ENCODE measurements at regions of chr17 and their contacts with region 1.

Region 1: DNA sequence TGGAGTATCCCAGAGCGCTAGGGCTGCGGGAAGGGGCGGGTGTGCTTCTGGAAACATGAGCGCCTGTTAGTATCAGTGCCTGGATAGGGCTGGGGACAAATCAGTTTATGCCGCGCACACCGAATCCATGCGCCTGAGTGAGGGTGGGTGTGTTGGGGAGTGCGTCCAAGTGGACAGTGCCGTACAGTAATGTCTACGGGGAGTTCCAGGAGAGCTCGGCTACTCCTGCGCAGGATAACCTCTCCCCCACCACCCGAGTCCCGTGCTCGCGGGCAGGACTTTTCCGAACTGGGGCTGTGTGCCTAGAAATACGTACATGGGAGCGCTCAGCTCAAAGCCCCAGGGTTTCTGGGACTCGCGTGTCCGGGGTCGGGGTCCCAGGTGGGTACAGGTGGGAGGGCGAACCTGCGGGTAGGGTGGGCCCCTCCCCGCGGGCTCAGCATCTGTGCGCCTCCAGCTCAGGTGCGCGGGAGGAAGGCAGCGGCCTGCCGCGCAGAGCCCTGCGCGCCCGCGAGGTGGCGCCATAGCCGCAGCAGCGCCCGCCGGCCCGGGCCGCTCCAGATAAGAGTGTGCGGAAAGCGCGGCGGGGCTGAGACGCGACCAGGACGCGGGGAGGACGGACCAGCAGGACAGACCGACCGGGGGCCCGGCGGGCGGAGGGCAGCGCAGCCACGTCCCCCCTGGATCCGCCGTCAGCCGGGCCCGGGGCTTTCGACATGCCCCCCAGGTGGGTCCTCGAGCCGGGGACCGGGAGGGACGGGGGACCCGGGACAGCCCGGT is at the start of gene HIC1:
- DNase-seq: peak; percentile 85
- ATAC-seq: peak; percentile 54
- H3K4me3 Mint-ChIP-seq: peak within 1 kb of the TSS; percentile 78
- H3K27ac Mint-ChIP-seq: peak within 1 kb of the TSS; percentile 82
- H3K4me1 Mint-ChIP-seq: peaks cover 27% of the 10 kb centered on the region
- H3K27me3 Mint-ChIP-seq: peaks cover 14% of the 10 kb centered on the region
- total RNA-seq, gene HIC1: 66.8 to 70.8 TPM

Region 2: GRCh38 chr17:1931759-1932579 is 122.7 kb before region 1 on chr17:
- CTCF ChIA-PET with region 1: no interaction called
- POLR2A ChIA-PET with region 1: no interaction called
- DNase-seq: no peak
- ATAC-seq: no peak
- H3K4me3 Mint-ChIP-seq: no peak overlapping the region
- H3K27ac Mint-ChIP-seq: no peak overlapping the region
- H3K4me1 Mint-ChIP-seq: no peaks in the 10 kb centered on the region
- H3K27me3 Mint-ChIP-seq: no peaks in the 10 kb centered on the region

Region 3: DNA sequence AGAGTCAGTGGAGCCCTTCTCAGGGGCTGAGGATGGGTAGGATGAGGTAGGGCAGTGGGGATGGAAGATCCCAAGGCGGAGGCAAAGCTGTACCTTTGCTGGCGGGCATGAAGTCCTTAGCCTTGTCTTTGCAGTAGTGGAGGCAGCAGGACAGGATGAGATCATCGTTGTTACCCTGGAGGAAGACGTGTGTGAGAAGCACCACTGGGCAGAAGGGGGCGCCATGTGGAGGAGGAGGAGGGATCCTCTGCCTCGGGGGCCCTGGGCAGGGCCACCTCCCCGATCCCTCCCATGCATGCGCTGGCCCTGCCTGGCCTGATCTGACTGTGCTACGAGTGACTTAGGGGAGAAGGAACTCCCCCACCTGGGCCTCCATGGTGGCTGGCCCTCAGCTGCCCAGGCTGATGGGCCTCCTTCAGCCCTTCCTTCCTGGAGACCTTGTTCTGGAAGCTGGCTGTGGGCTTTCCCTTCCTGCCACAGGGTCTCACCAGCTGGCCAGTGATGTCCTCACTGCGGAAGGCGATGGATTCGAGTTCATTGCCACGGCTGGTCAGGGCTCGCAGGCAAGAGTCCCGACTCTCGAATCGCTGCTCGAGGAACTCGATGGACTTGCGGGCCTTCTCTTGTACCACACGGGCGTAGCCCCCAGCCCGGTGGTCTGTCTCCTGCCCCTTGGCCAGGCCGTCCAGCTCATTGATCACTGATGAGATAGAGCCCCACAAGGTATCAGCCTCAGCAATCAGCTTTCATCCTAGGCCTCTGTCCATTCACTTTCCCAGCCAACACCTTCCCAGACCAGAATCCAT is 10.5 kb after region 1 on chr17:
- CTCF ChIA-PET with region 1: interaction called, 26 read pairs
- POLR2A ChIA-PET with region 1: interaction called, 7 read pairs
- DNase-seq: peak; percentile 84
- ATAC-seq: peak; percentile 65
- H3K4me3 Mint-ChIP-seq: no peak overlapping the region
- H3K27ac Mint-ChIP-seq: peak overlapping the region; percentile 79
- H3K4me1 Mint-ChIP-seq: peaks cover 82% of the 10 kb centered on the region
- H3K27me3 Mint-ChIP-seq: no peaks in the 10 kb centered on the region

Region 4: GRCh38 chr17:2094891-2095535 is 40.3 kb after region 1 on chr17:
- CTCF ChIA-PET with region 1: interaction called, 89 read pairs
- POLR2A ChIA-PET with region 1: interaction called, 3 read pairs
- DNase-seq: no peak
- ATAC-seq: no peak
- H3K4me3 Mint-ChIP-seq: no peak overlapping the region
- H3K27ac Mint-ChIP-seq: no peak overlapping the region
- H3K4me1 Mint-ChIP-seq: peaks cover 45% of the 10 kb centered on the region
- H3K27me3 Mint-ChIP-seq: no peaks in the 10 kb centered on the region

Region 5: DNA sequence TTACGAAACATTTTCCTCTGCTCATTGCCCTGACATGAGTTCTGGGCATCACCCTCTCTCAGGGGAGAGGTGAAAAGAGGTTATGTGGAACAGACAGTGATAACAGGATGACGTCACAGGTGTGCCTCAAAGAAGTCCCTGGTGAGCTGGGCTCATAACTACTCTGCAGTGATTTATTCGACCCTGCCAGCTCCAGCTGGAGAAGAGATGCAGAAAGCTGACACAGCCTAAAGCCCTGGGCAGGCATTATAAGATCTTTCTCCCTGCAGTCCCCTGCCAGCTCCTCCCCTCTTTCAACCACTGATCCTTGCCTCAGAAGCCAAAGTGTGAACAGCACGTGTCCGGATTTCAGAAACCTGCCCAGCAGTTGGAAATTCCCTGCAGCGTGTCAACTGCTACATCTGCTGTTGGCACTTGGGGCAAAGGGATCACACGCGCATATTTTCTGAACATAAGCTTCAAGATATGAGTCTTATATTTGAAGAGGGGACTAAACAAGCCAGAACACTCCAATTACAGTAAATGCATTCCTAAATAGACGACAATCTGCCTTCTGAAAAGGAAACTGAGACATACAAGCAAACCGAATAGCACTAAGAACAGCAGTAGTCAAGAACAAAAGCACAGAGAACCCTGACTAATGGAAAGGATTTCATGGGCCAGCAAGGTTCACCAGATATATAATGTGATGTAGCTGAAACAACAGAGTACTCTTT is 168.4 kb after region 1 on chr17:
- CTCF ChIA-PET with region 1: interaction called, 19 read pairs
- POLR2A ChIA-PET with region 1: interaction called, 3 read pairs
- DNase-seq: peak; percentile 62
- ATAC-seq: peak; percentile 82
- H3K4me3 Mint-ChIP-seq: no peak overlapping the region
- H3K27ac Mint-ChIP-seq: peak overlapping the region; percentile 26
- H3K4me1 Mint-ChIP-seq: peaks cover 41% of the 10 kb centered on the region
- H3K27me3 Mint-ChIP-seq: no peaks in the 10 kb centered on the region

Region 6: DNA sequence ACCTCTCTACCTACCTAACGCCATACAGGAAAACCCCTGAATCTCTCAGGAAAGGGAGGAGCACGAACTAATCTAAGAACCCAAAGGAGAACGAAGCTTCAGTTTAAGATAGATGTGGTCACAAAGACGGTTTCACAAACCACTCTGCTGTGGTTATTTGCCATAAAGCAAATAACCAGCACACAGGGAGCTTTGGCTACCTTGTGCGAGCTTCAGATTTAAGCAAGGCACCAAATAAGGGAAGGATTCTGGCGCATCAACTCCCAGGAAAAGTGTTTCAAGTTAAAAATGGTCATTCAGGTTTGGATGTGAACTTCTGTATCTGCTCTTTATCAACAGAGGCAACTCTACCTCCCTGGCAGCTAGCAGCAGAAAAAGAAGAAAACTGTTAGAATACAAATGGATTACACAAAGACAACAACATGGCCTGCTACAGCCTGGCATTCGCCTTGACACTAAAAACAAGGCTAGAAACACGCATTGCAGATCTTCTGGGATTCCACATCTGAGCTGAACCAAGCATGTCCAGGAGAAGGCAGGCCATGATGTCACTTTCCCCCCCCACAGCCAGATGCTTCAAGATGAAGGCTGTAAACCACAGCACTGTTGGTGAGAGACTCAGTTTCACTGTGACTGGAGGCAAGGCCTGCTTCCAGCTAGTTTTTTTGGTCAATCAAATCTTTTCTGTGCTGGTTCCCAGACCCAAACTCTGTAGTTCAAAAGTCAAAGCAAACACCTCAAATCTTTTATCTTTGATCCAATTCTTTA is 205.3 kb after region 1 on chr17:
- CTCF ChIA-PET with region 1: interaction called, 343 read pairs
- POLR2A ChIA-PET with region 1: interaction called, 6 read pairs
- DNase-seq: peak; percentile 88
- ATAC-seq: peak; percentile 77
- H3K4me3 Mint-ChIP-seq: peak overlapping the region; percentile 74
- H3K27ac Mint-ChIP-seq: peak overlapping the region; percentile 92
- H3K4me1 Mint-ChIP-seq: peaks cover 81% of the 10 kb centered on the region
- H3K27me3 Mint-ChIP-seq: no peaks in the 10 kb centered on the region

Region 7: GRCh38 chr17:2282297-2282873 is 227.7 kb after region 1 on chr17:
- CTCF ChIA-PET with region 1: interaction called, 109 read pairs
- POLR2A ChIA-PET with region 1: interaction called, 7 read pairs
- DNase-seq: no peak
- ATAC-seq: peak; percentile 54
- H3K4me3 Mint-ChIP-seq: no peak overlapping the region
- H3K27ac Mint-ChIP-seq: peak overlapping the region; percentile 76
- H3K4me1 Mint-ChIP-seq: peaks cover 50% of the 10 kb centered on the region
- H3K27me3 Mint-ChIP-seq: no peaks in the 10 kb centered on the region

Region 8: GRCh38 chr17:2347547-2348307 is 293.0 kb after region 1 on chr17:
- CTCF ChIA-PET with region 1: interaction called, 11 read pairs
- POLR2A ChIA-PET with region 1: no interaction called
- DNase-seq: no peak
- ATAC-seq: no peak
- H3K4me3 Mint-ChIP-seq: no peak overlapping the region
- H3K27ac Mint-ChIP-seq: no peak overlapping the region
- H3K4me1 Mint-ChIP-seq: peaks cover 18% of the 10 kb centered on the region
- H3K27me3 Mint-ChIP-seq: no peaks in the 10 kb centered on the region